ENCODE measurements at regions of chr2 and their contacts with region 1.

Region 1: GRCh38 chr2:12127638-12128037 is 381.2 kb downstream of the LPIN1 start:
- DNase-seq: peak; percentile 37
- H3K4me3 Mint-ChIP-seq: no peak overlapping the region
- H3K27ac Mint-ChIP-seq: peak overlapping the region; percentile 74
- H3K4me1 Mint-ChIP-seq: peaks cover 2% of the 10 kb centered on the region
- H3K27me3 Mint-ChIP-seq: no peaks in the 10 kb centered on the region

Region 2: DNA sequence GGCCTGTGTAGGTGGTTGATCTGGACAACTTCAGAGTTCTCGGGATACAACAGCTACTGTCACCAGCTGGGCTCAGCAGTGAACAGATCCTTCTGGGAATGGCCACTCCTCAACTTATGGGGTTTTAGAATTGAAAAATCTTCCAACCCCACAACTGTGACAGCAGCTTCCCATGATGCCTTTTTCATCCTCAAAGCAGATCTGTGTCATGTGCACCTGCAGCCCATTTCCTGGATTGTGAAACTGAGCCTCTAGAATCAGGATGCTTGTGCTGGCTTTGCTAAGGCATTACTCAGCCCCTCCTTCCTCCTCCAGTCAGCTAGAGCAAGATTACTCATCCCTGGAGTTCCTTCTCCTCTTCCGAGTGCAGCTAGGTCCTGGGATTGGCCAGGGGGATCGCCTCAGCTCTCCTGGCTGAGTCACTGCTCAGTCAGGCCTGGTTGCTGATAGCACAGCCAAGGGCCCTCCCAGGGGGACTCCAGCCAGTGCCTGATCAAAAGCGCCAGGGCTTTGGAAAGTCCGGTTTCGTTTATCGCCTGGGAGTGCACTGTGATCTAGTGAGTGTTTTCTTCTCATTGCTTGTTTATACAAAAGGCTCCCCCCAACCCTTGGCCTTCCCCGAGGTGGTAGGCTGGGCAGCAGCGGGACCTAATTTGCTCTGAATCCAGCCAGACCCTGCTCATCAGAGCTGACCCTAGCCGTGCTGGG is 383.6 kb before region 1 on chr2:
- CTCF ChIA-PET with region 1: no interaction called
- intact Hi-C with region 1: loop called (anchors 5 kb)
- DNase-seq: peak; percentile 92
- H3K4me3 Mint-ChIP-seq: no peak overlapping the region
- H3K27ac Mint-ChIP-seq: peak overlapping the region; percentile 69
- H3K4me1 Mint-ChIP-seq: peaks cover 47% of the 10 kb centered on the region
- H3K27me3 Mint-ChIP-seq: no peaks in the 10 kb centered on the region

Region 3: DNA sequence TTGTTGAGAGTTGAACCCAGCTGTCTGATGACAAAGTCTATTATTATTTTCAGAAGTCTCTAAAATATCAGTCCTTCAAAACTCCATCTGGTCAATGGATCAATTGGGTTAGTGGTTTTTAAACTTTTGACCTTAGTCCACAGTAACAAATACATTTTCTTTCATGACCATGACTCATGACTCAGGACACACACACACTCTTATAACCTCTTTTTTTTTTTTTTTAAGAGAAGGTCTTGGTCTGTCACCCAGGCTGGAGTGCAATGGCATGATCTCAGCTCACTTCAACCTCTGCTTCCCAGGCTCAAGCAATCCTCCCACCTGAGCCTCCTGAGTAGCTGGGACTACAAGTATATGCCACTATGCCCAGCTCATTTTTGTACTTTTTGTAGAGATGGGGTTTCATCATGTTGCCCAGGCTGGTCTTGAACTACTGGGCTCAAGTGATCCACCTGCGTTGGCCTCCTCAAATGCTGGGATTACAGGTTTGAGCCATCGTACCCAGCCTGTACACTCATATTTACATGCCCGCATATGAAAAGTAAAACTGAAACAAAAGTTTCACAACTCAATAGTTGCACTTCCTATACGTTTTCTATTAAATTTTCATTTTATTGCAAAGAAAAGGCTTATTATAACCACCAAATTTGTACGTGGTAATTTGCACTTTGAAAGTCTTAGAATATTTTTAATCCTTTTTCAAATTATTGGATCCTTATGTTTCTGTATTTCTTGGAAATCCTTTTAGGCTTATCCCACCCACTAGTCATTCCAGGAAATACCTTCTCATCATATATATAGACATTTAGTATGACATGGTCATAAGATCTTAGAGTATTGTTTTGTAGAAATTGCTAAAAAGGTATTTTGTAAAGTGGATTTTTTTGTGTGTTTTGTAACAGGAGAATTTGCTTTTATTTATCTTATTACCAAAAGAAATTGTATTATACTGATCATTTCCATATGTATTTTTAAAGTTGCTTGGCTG is 182.2 kb before region 1 on chr2:
- CTCF ChIA-PET with region 1: no interaction called
- intact Hi-C with region 1: loop called (anchors 5 kb)
- DNase-seq: peak; percentile 32
- H3K4me3 Mint-ChIP-seq: peak overlapping the region; percentile 15
- H3K27ac Mint-ChIP-seq: no peak overlapping the region
- H3K4me1 Mint-ChIP-seq: peaks cover 13% of the 10 kb centered on the region
- H3K27me3 Mint-ChIP-seq: no peaks in the 10 kb centered on the region

Region 4: GRCh38 chr2:12106440-12107080 is 21.1 kb before region 1 on chr2:
- CTCF ChIA-PET with region 1: interaction called, 3 read pairs
- intact Hi-C with region 1: loop called (anchors 1 kb)
- DNase-seq: peak; percentile 82
- H3K4me3 Mint-ChIP-seq: no peak overlapping the region
- H3K27ac Mint-ChIP-seq: no peak overlapping the region
- H3K4me1 Mint-ChIP-seq: peaks cover 37% of the 10 kb centered on the region
- H3K27me3 Mint-ChIP-seq: no peaks in the 10 kb centered on the region

Region 5: GRCh38 chr2:12192762-12193161 is 65.1 kb after region 1 on chr2:
- CTCF ChIA-PET with region 1: no interaction called
- intact Hi-C with region 1: loop called (anchors 2 kb)
- DNase-seq: peak; percentile 64
- H3K4me3 Mint-ChIP-seq: no peak overlapping the region
- H3K27ac Mint-ChIP-seq: peak overlapping the region; percentile 64
- H3K4me1 Mint-ChIP-seq: peaks cover 17% of the 10 kb centered on the region
- H3K27me3 Mint-ChIP-seq: no peaks in the 10 kb centered on the region

Region 6: GRCh38 chr2:12501469-12502158 is 374.0 kb after region 1 on chr2:
- CTCF ChIA-PET with region 1: no interaction called
- intact Hi-C with region 1: loop called (anchors 5 kb)
- DNase-seq: peak; percentile 88
- H3K4me3 Mint-ChIP-seq: no peak overlapping the region
- H3K27ac Mint-ChIP-seq: peak overlapping the region; percentile 47
- H3K4me1 Mint-ChIP-seq: peaks cover 91% of the 10 kb centered on the region
- H3K27me3 Mint-ChIP-seq: no peaks in the 10 kb centered on the region